Activated CD4-positive, alpha-beta T cell treated with anti-CD3 and anti-CD28 coated beads for 36 hours (primary cell): ENCODE measurements at regions of chr16 and their contacts with region 1.

Region 1: GRCh38 chr16:50806099-50807062 is 64.5 kb downstream of the CYLD start:
- DNase-seq: peak; percentile 91
- ATAC-seq: peak; percentile 94
- H3K4me3 Mint-ChIP-seq: peak overlapping the region; percentile 56
- H3K27ac Mint-ChIP-seq: peak overlapping the region; percentile 55
- H3K4me1 Mint-ChIP-seq: peaks cover 12% of the 10 kb centered on the region
- H3K27me3 Mint-ChIP-seq: no peaks in the 10 kb centered on the region

Region 2: GRCh38 chr16:50326949-50327402 is 479.4 kb before region 1 on chr16:
- CTCF ChIA-PET with region 1: interaction called, 20 read pairs
- POLR2A ChIA-PET with region 1: no interaction called
- intact Hi-C with region 1: loop called in 1 of 2 experiments (anchors 1 kb)
- DNase-seq: peak; percentile 81
- ATAC-seq: peak; percentile 92
- H3K4me3 Mint-ChIP-seq: no peak overlapping the region
- H3K27ac Mint-ChIP-seq: peak overlapping the region; percentile 82
- H3K4me1 Mint-ChIP-seq: peaks cover 58% of the 10 kb centered on the region
- H3K27me3 Mint-ChIP-seq: no peaks in the 10 kb centered on the region

Region 3: GRCh38 chr16:50473356-50473945 is 332.9 kb before region 1 on chr16:
- CTCF ChIA-PET with region 1: interaction called, 4 read pairs
- POLR2A ChIA-PET with region 1: no interaction called
- intact Hi-C with region 1: loop called in 1 of 2 experiments (anchors 5 kb)
- DNase-seq: peak; percentile 54
- ATAC-seq: peak; percentile 82
- H3K4me3 Mint-ChIP-seq: no peak overlapping the region
- H3K27ac Mint-ChIP-seq: peak overlapping the region; percentile 55
- H3K4me1 Mint-ChIP-seq: peaks cover 26% of the 10 kb centered on the region
- H3K27me3 Mint-ChIP-seq: peaks cover 3% of the 10 kb centered on the region

Region 4: DNA sequence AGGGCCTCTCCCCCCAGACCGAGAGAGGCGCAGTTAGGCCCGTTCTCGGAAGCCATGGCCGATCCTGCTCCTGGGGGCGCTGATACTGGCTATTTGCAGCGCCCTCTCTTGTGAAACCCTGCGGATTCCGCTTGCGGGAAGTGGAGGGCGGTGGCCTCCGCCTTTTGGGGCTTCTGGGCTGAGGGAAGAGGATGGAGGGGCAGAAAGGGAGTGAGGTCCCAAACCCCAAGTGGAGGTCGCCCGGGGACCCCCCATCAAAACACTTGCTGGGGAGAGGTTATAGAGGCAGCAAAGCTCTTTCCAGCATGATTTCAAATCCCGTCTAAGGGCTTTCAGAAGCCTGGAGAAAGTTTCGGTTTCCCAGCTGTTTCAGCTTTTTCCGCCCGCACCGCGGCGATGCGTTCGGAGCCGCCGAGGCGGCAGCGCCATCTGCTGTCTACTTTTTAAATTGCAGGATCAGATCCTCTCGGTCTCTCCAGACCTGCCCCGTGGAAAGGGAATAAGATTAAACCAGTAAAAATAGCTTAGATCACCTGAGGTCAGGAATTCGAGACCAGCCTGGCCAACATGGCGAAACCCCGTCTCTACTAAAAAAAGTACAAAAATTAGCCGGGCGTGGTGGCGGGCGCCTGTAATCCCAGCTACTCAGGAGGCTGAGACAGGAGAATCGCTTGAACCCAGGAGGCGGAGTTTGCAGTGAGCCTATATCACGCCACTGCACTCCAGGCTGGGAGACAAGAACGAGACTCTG is 141.1 kb before region 1 on chr16:
- CTCF ChIA-PET with region 1: interaction called, 86 read pairs
- POLR2A ChIA-PET with region 1: interaction called, 3 read pairs
- intact Hi-C with region 1: loop called (anchors 1 kb)
- DNase-seq: peak; percentile 90
- ATAC-seq: peak; percentile 43
- H3K4me3 Mint-ChIP-seq: peak overlapping the region; percentile 60
- H3K27ac Mint-ChIP-seq: peak overlapping the region; percentile 79
- H3K4me1 Mint-ChIP-seq: peaks cover 37% of the 10 kb centered on the region
- H3K27me3 Mint-ChIP-seq: no peaks in the 10 kb centered on the region

Region 5: DNA sequence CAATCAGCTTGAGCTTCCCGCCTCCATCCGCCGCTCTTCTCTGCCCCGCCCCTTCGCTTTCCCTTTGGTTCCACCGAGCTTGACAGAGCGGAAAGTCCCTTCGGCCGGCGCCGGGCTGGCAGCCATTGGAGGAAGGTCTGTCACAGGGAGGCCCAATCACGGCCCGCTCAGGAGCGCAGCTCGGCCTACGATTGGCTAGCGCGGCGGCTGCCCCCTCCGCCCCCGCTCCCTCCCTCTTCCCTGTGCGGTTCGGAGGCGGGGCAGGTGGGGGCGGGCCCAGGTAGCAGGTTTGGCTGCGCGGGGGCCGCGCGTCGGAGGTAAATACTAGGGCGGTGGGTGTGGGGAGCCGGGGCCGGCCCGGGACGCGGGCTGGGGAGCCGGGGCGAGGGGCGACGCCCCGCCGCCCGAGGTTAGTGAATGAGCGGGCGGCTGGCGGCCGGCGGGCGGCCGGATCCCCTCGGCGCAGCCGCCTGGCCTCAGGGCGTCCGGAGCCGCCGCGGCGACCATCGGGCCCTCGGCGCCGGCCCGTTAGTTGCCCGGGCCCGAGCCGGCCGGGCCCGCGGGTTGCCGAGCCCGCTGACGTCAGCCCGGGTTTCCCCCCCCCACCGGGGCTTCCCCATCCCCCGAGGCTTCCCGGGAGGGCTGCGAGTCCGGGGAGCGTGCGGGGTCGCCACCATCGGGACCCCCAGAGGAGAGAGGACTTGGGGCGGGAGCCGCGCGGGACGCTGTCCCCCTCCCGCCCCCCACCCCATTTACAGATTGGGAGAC is 64.4 kb before region 1 on chr16 and contains the start of gene CYLD:
- CTCF ChIA-PET with region 1: interaction called, 28 read pairs
- POLR2A ChIA-PET with region 1: no interaction called
- intact Hi-C with region 1: loop called (anchors 1 to 2 kb)
- DNase-seq: peak; percentile 100
- ATAC-seq: peak; percentile 91
- H3K4me3 Mint-ChIP-seq: peak within 1 kb of the TSS; percentile 93
- H3K27ac Mint-ChIP-seq: peak within 1 kb of the TSS; percentile 95
- H3K4me1 Mint-ChIP-seq: peaks cover 42% of the 10 kb centered on the region
- H3K27me3 Mint-ChIP-seq: no peaks in the 10 kb centered on the region
- total RNA-seq, gene CYLD: 72.4 to 92.8 TPM

Region 6: DNA sequence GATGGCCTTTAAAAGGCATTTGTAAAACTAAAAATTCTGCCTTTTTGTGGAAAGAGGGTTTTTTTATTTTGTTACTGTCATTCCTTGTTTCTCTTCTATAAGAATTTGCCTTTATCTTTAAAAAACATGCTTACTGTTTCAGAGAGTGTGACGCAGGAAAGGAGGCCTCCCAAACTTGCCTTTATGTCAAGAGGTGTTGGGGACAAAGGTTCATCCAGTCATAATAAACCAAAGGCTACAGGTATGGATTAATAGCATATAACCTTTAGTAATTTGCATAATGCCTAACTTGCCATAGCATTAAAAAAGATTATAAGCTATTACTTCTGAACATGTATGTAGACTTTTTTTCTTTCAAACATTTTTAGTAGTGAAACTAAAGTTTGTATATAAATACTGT is 30.3 kb before region 1 on chr16:
- CTCF ChIA-PET with region 1: interaction called, 24 read pairs
- POLR2A ChIA-PET with region 1: no interaction called
- intact Hi-C with region 1: no loop called
- DNase-seq: no peak
- ATAC-seq: no peak
- H3K4me3 Mint-ChIP-seq: no peak overlapping the region
- H3K27ac Mint-ChIP-seq: no peak overlapping the region
- H3K4me1 Mint-ChIP-seq: peaks cover 66% of the 10 kb centered on the region
- H3K27me3 Mint-ChIP-seq: no peaks in the 10 kb centered on the region